ENCODE measurements at regions of chr12 and their contacts with region 1.

Region 1: DNA sequence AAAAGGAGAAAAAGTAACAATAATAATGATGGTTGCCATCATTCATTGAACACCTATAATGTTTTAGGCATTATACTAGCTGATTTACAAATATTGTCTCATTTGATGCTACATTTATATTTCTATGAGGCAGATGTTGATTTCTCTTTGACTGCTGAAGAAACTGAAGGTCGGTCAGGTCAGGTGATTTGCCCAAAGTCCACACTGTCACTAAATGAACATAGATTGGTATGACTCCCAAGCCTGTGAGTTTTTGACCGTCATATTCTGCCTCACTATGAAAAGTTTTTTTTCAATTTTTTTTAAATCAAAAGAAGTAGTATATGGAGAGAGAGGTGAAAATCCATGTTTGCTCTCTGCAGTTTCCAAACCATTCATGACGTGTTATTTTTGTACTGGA is 10.8 kb downstream of the ALG10B start:
- DNase-seq: no peak
- H3K4me3 ChIP-seq: no peak overlapping the region
- H3K27ac ChIP-seq: no peak overlapping the region
- H3K27me3 ChIP-seq: no peaks in the 10 kb centered on the region
- CTCF ChIP-seq: no peak

Region 2: GRCh38 chr12:38316391-38317129 is 10.8 kb before region 1 on chr12 and contains the start of gene ALG10B:
- CTCF ChIA-PET with region 1: interaction called, 16 read pairs
- POLR2A ChIA-PET with region 1: no interaction called
- DNase-seq: peak; percentile 94
- H3K4me3 ChIP-seq: peak within 1 kb of the TSS; percentile 89
- H3K27ac ChIP-seq: peak within 1 kb of the TSS; percentile 77
- H3K27me3 ChIP-seq: no peaks in the 10 kb centered on the region
- CTCF ChIP-seq: peak; percentile 58
- polyA plus RNA-seq, gene ALG10B: 3.3 and 3.7 TPM in 2 replicates

Region 3: DNA sequence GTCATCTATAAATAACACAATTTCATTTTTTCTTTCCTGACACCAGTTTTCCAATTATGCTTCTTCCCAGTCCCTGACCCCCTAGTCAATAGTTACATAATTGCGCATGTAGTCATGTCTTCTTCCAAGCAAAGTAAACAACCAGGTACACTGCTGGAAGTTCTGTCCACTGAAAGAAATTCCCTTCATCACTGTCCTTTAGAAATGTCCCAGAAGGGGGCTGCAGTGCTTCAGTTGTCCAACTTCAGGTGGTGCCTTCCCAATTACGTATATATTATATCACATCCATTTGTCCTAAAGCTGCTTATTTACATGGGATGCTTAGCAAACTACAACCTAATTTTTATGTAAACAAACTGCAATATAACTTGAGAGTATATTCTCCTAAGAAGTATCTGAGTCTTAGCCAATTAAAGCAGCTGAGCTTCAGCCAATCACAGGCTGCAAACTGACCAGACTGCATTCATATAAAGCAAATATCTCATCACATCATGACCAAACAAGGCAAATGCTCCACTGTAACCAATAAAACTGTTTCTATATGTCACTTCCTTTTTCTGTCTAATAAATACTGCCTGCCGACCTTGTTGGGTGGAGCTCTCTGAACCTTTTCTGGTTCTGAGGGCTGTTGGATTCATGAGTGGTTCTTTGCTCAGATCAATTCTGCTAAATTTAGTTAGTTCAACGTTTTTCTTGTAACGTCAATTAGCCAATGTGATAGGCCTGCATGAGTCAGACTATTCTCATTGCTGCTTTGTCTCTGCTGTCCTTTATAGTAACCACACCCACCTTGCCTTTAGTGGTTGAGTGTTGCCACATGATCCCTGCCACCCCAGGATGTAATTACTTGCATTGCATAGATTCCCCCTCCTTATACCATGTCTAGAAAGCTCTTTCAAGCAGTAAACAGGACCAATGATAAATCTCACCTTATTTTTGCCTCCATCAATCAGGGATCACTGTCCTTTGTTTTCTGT is 228.6 kb after region 1 on chr12:
- CTCF ChIA-PET with region 1: no interaction called
- POLR2A ChIA-PET with region 1: no interaction called
- DNase-seq: no peak
- H3K4me3 ChIP-seq: no peak overlapping the region
- H3K27ac ChIP-seq: no peak overlapping the region
- H3K27me3 ChIP-seq: no peaks in the 10 kb centered on the region
- CTCF ChIP-seq: no peak

Region 4: DNA sequence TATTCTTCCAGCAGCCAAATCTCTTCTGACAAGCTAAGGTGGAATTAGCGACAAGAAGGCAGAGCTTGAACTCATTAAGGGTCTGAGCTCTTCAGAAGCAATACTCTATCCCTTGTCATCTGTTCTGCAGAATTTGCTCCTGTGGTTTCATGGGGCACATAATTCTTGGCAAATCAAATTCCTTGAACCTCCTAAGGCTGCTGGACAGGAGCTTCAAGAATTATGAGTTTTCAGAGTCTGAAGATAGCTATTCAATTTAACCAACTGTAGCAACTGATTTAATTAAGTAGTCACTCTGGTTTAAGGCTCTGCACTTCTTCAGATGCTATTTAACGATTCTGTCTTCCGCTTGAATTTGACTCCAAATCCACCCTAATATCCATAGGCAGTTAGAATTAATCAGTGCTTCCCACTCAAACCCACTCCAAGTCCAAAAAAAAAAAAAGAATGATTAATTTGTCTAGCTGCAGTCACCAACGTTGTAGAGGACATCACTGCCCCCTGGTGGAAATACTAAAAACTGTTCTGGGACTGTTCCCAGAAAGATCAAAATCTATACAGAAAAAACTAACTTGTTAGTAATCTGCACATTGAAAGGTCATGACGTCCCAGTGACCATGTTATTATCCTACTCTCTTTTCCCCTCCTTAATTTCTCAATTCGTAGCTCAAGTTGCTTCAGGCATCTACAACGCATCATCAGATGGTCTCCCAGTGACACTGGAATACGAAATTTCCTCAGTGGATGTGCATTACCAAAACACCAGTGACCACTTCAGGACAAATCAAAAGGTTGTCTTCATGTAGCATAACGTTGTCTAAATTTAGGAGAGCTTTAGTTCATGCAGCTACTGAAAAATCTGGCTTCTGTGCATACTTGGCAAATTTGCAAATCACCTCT is 945.8 kb after region 1 on chr12:
- CTCF ChIA-PET with region 1: interaction called, 21 read pairs
- POLR2A ChIA-PET with region 1: no interaction called
- DNase-seq: no peak
- H3K4me3 ChIP-seq: no peak overlapping the region
- H3K27ac ChIP-seq: no peak overlapping the region
- H3K27me3 ChIP-seq: no peaks in the 10 kb centered on the region
- CTCF ChIP-seq: peak; percentile 57